ENCODE measurements at regions of chr9 and their contacts with region 1.

Region 1: DNA sequence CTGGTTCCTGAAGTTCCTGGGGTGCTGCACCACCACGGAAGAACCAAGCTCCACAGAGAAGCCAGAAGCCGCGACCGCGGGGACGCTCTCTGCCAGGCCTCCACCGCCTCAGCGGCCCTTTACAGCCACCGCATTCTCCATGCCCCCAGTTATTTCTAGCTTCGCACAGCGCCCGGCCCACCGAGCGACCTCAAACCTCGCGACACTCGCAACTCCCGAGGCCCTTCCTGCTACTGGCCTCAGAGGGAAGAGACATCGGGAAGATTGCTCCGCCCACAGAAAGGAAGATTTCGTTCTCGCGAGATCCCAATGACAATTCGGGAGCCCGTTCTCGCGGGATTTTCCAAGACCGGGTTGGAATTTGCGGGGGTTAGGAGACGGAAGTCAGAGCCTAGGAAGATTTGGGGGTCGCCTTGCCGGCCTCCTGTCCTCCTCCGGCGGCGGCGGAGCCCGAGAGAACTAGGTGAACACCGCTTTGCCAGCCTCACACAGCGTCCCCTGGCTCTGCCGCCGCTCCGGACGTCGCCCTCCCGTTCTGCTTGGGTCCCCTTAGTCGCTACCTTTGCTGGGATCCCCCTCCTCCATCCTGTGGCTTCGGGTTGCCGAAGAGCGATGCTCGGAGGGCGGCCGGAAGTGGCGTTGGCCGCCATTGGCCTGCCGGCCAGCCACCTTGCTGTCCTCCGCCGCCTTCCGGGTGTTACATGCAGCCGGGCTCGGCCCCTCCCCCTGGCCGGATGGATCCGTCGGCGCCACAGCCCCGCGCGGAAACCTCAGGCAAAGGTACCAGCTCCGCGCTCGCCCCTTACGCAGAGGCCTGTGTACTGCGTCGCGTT is at the start of gene ERCC6L2:
- DNase-seq: peak; percentile 97
- ATAC-seq: peak; percentile 94
- H3K4me3 Mint-ChIP-seq: no peak within 1 kb of the TSS
- H3K27ac Mint-ChIP-seq: no peak within 1 kb of the TSS
- H3K4me1 Mint-ChIP-seq: peaks cover 20% of the 10 kb centered on the region
- H3K27me3 Mint-ChIP-seq: no peaks in the 10 kb centered on the region
- total RNA-seq, gene ERCC6L2: 24.0 to 25.9 TPM

Region 2: GRCh38 chr9:95494416-95495371 is 380.8 kb before region 1 on chr9:
- CTCF ChIA-PET with region 1: no interaction called
- POLR2A ChIA-PET with region 1: no interaction called
- intact Hi-C with region 1: loop called in 1 of 2 experiments (anchors 5 kb)
- DNase-seq: peak; percentile 92
- ATAC-seq: peak; percentile 98
- H3K4me3 Mint-ChIP-seq: peak overlapping the region; percentile 68
- H3K27ac Mint-ChIP-seq: peak overlapping the region; percentile 93
- H3K4me1 Mint-ChIP-seq: peaks cover 68% of the 10 kb centered on the region
- H3K27me3 Mint-ChIP-seq: no peaks in the 10 kb centered on the region

Region 3: DNA sequence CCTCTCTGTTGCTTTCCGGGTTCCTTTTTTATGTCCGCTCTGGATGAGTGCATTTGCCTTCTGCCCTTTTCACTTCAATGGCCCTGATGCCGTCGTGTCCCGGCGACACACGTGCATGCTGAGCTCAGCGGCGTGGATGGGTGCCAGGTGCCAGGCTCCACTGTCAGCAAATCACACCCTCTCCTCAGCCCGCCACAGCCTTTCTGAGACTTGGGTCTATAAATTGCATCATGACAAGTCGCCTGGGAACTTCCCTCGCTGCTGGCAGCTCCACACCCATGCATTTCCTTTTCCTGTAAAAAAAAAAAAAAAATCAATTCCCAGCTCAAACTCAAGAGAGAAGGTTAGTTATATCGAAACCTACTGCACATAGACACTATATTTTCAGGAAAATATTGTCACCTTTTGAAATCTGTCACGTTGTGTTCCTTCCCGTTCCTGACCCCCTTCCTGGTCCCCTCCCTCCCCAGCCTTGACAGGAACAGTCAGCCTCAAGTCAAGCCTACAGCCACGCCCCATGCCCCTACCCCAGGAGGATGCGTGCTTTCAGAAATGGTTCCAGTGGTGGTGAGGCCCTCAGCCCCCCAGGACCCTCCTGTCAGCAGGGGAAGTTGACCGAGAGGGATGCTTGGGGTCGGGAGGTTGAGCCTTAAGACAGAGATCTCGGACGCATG is 248.5 kb before region 1 on chr9:
- CTCF ChIA-PET with region 1: no interaction called
- POLR2A ChIA-PET with region 1: no interaction called
- intact Hi-C with region 1: loop called in 1 of 2 experiments (anchors 1 kb)
- DNase-seq: peak; percentile 86
- ATAC-seq: peak; percentile 98
- H3K4me3 Mint-ChIP-seq: no peak overlapping the region
- H3K27ac Mint-ChIP-seq: peak overlapping the region; percentile 91
- H3K4me1 Mint-ChIP-seq: peaks cover 19% of the 10 kb centered on the region
- H3K27me3 Mint-ChIP-seq: peaks cover 6% of the 10 kb centered on the region

Region 4: DNA sequence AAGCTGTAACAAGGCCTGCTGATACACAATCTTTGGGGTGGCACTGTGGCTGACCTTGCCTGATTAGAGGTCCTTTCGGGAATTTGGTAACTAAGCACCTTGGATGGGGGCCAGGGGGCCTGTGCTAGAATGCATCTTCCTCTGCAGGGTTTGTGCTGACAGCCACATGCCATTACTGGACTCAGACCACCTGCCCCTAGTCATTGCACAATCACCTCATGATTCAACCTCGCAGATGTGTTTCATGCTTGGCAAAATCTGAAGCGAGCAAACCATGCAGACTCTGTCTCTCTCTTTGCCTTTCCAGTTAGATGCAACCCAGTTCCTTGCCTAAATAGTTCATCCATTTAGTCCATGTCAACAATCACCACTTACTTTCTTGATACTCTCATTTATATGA is 96.6 kb before region 1 on chr9:
- CTCF ChIA-PET with region 1: no interaction called
- POLR2A ChIA-PET with region 1: no interaction called
- intact Hi-C with region 1: no loop called
- DNase-seq: no peak
- ATAC-seq: no peak
- H3K4me3 Mint-ChIP-seq: no peak overlapping the region
- H3K27ac Mint-ChIP-seq: no peak overlapping the region
- H3K4me1 Mint-ChIP-seq: no peaks in the 10 kb centered on the region
- H3K27me3 Mint-ChIP-seq: no peaks in the 10 kb centered on the region

Region 5: DNA sequence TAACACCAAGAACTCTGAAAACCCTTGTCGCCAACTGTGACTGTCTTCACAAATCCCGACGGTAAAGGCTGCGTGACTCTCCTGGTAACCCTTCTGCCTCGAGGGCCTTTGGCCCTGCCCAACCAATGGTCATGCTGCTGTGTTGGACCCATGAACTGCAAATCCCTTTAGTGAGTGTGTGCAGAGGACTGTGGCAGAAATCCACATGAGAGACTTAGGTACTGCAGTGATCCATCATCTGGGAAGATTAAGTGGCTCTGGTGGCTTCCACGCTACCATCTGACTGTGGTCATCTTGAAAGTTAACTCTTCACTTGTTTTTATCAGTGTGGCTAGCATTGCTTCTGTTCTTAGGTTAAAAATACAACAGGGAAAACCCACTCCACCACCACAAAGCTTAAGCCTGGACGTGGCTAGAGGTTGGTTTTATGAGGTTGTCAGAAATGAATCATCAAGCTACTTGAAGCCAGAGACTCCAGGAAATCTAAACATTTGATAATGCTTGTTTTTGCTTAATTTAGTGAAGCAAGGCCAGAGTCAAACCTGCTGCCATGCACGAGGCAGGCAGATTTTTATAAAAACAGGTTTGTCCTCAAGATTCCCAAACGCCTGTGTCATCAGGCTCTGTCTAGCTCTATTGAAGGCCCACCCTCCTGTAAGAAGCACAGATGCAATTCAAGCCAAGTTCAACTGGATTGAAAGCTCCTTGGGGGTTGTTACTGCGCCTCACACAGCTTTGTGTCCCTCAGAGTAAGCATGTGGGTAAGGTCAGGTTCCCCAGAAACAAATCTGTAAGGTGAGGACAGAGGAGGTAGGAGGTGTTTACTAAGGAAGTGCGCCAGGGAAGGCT is 52.7 kb before region 1 on chr9:
- CTCF ChIA-PET with region 1: no interaction called
- POLR2A ChIA-PET with region 1: no interaction called
- intact Hi-C with region 1: loop called (anchors 2 kb)
- DNase-seq: peak; percentile 55
- ATAC-seq: peak; percentile 86
- H3K4me3 Mint-ChIP-seq: no peak overlapping the region
- H3K27ac Mint-ChIP-seq: no peak overlapping the region
- H3K4me1 Mint-ChIP-seq: peaks cover 14% of the 10 kb centered on the region
- H3K27me3 Mint-ChIP-seq: no peaks in the 10 kb centered on the region

Region 6: GRCh38 chr9:96020792-96021550 is 145.4 kb after region 1 on chr9:
- CTCF ChIA-PET with region 1: no interaction called
- POLR2A ChIA-PET with region 1: no interaction called
- intact Hi-C with region 1: loop called (anchors 1 to 5 kb)
- DNase-seq: peak; percentile 71
- ATAC-seq: peak; percentile 38
- H3K4me3 Mint-ChIP-seq: peak overlapping the region; percentile 68
- H3K27ac Mint-ChIP-seq: peak overlapping the region; percentile 63
- H3K4me1 Mint-ChIP-seq: peaks cover 57% of the 10 kb centered on the region
- H3K27me3 Mint-ChIP-seq: peaks cover 43% of the 10 kb centered on the region

Region 7: GRCh38 chr9:96418074-96418809 is 542.7 kb after region 1 on chr9 and contains the start of gene ZNF367:
- CTCF ChIA-PET with region 1: no interaction called
- POLR2A ChIA-PET with region 1: no interaction called
- intact Hi-C with region 1: loop called (anchors 1 to 5 kb)
- DNase-seq: peak; percentile 97
- ATAC-seq: peak; percentile 81
- H3K4me3 Mint-ChIP-seq: peak within 1 kb of the TSS; percentile 93
- H3K27ac Mint-ChIP-seq: peak within 1 kb of the TSS; percentile 90
- H3K4me1 Mint-ChIP-seq: peaks cover 38% of the 10 kb centered on the region
- H3K27me3 Mint-ChIP-seq: no peaks in the 10 kb centered on the region
- total RNA-seq, gene ZNF367: 22.0 to 24.2 TPM

Region 8: DNA sequence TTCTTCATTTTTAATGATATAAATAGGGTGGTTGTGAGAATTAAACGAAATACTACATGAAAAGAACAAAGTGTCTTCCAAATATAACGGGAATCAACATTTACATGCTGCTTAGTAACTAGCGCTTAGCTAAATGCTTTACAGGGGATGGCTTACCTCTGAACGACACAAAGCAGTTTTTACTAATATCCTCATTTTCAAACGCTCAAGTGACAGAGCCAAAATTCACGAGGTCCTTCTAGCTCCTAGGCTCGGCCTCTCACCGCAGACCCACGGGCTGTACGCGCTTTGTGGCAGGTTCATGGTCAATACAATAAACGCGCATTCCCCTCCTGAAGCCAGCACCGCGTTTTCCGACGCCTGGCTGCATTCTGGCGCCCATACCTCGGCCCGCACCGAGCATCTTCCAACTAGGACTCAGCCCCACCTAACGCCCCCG is 901.9 kb after region 1 on chr9:
- CTCF ChIA-PET with region 1: no interaction called
- POLR2A ChIA-PET with region 1: no interaction called
- intact Hi-C with region 1: loop called in 1 of 2 experiments (anchors 5 kb)
- DNase-seq: no peak
- ATAC-seq: no peak
- H3K4me3 Mint-ChIP-seq: peak overlapping the region; percentile 93
- H3K27ac Mint-ChIP-seq: peak overlapping the region; percentile 95
- H3K4me1 Mint-ChIP-seq: peaks cover 24% of the 10 kb centered on the region
- H3K27me3 Mint-ChIP-seq: no peaks in the 10 kb centered on the region